Right cardiac atrium (tissue), 5 donors: ENCODE measurements at regions of chr5 and their contacts with region 1.

Region 1: GRCh38 chr5:58064801-58065200 is 395.1 kb downstream of the PLK2 start:
- DNase-seq: no peak
- ATAC-seq: no peak
- H3K4me3 ChIP-seq: no peak overlapping the region
- H3K27ac ChIP-seq: no peak overlapping the region
- H3K4me1 ChIP-seq: peaks cover 2% of the 10 kb centered on the region
- H3K27me3 ChIP-seq: no peaks in the 10 kb centered on the region

Region 2: DNA sequence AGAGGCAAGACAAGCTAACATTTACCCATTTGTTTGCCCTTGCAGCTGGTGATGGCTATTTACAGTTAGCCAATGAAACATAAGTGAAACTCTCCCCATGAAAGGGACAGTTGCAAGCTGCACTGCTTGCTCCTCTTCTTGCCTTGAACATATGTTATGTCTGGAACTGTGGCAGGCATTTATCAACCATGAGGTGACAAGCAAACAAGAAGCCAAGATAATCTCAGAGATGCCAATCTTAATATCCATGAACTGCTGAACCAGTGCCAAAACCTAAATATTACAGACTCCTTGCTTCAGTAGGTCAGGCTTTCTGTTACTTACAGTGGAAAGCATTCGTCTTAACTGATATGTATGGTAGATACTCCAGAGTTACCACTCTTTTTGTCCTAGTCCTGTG is 715.6 kb before region 1 on chr5:
- intact Hi-C with region 1: loop called in 1 of 4 experiments (anchors 5 kb)
- DNase-seq: no peak
- ATAC-seq: no peak
- H3K4me3 ChIP-seq: no peak overlapping the region
- H3K27ac ChIP-seq: no peak overlapping the region
- H3K4me1 ChIP-seq: peaks cover 3% of the 10 kb centered on the region
- H3K27me3 ChIP-seq: no peaks in the 10 kb centered on the region

Region 3: DNA sequence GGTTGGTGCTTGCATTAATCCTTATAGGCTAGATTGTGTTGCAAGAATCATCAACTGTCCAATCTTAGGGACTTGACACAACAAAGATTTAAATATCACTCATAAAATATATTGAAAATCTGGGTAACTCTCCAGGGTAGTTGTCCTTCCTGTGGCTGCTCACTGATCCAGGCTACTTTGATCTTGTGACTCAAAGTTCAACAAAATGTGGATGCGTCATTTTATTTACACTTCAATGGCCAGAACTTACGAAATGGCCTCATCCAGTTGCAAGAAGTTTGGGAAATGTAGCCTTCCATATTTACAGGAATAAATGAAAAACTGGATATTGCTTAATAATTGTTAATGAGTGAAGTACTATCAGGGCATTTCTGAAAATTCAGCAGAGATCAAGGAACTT is 346.6 kb before region 1 on chr5:
- intact Hi-C with region 1: no loop called
- DNase-seq: no peak
- ATAC-seq: no peak
- H3K4me3 ChIP-seq: no peak overlapping the region
- H3K27ac ChIP-seq: no peak overlapping the region
- H3K4me1 ChIP-seq: no peaks in the 10 kb centered on the region
- H3K27me3 ChIP-seq: no peaks in the 10 kb centered on the region